Dendritic cell treated with granulocyte-macrophage colony-stimulating factor and Interleukin-4, amounts not matched to agents 40 ng/mL and 50 ng/mL, for 4 days (primary cell): ENCODE measurements at regions of chr17 and their contacts with region 1.

Region 1: DNA sequence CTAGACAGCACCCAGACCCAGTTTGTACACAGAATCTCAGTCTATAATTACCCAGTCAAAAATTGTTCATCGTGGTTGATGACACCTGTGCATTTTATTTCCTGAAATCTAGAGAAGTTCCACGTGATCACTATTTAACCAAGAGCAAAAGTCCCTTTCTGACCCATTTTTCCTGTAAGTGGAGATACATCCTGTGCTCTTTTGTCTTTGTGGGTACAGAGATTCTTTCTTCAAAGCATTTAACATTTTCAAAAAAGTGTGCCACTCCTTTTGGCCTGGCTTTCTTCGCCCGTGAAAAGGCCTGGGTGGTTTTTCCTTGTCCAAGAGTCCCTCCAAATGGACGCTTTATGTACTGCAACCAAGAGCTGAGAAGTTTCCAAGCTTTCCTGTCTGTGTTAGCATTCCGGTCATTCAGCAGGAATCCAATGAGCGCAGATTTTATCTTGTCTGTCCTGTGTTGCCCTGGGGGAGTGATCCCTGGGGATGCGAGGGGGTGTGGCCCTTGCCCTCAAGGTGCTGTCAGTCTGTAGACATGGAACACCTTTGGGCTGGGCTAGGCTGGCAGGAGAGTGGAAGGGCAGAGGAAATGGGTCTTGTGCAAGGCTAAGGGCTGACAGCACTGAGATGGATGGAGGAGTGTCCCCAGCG is 161.1 kb upstream of the CACNG5 start:
- H3K4me3 Mint-ChIP-seq: no peak overlapping the region
- H3K27ac Mint-ChIP-seq: no peak overlapping the region
- H3K4me1 Mint-ChIP-seq: no peaks in the 10 kb centered on the region
- H3K27me3 Mint-ChIP-seq: no peaks in the 10 kb centered on the region

Region 2: GRCh38 chr17:66255112-66255511 is 418.7 kb before region 1 on chr17:
- intact Hi-C with region 1: loop called (anchors 2 kb)
- H3K4me3 Mint-ChIP-seq: no peak overlapping the region
- H3K27ac Mint-ChIP-seq: no peak overlapping the region
- H3K4me1 Mint-ChIP-seq: no peaks in the 10 kb centered on the region
- H3K27me3 Mint-ChIP-seq: peaks cover 10% of the 10 kb centered on the region